Body of pancreas (tissue), 4 donors: ENCODE measurements at regions of chr17 and their contacts with region 1.

Region 1: GRCh38 chr17:19447085-19447583 is 36.1 kb downstream of the RNF112 start:
- DNase-seq: peak; percentile 79 to 83 (median 82)
- ATAC-seq: peak; percentile 75
- H3K4me3 ChIP-seq: no peak overlapping the region
- H3K27ac ChIP-seq: peak overlapping the region in 2 of 4 donors; percentile 2 to 9
- H3K4me1 ChIP-seq: peaks cover 5% of the 10 kb centered on the region
- H3K27me3 ChIP-seq: no peaks in the 10 kb centered on the region
- CTCF ChIP-seq: peak; percentile 79 to 98 (median 92)
- POLR2A ChIP-seq: no peak

Region 2: GRCh38 chr17:19369846-19370492 is 77.2 kb before region 1 on chr17:
- intact Hi-C with region 1: loop called (anchors 5 kb)
- DNase-seq: peak in 1 of 4 donors; percentile 9
- ATAC-seq: no peak
- H3K4me3 ChIP-seq: no peak overlapping the region
- H3K27ac ChIP-seq: no peak overlapping the region
- H3K4me1 ChIP-seq: peaks cover 3% of the 10 kb centered on the region
- H3K27me3 ChIP-seq: no peaks in the 10 kb centered on the region
- CTCF ChIP-seq: no peak
- POLR2A ChIP-seq: no peak

Region 3: DNA sequence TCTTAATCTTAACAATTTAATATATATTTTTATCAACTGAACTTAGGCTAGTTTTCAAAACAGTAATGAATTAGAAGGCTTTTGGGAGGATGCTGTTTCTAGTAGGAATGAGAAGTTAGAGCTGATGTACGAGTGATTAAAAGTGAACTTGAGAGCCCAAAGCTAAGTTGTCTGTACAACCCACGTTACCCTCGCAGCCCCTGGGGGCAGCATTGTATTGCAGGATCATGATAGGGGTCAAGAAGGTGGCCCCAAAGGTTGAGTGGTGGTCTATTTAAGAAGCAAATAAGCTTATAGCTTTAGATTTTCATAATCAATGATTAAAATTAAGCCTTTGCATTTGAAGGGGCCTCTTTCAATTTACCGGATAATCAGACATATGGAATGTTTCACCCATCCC is 167.8 kb after region 1 on chr17:
- intact Hi-C with region 1: no loop called
- DNase-seq: no peak
- ATAC-seq: no peak
- H3K4me3 ChIP-seq: no peak overlapping the region
- H3K27ac ChIP-seq: no peak overlapping the region
- H3K4me1 ChIP-seq: no peaks in the 10 kb centered on the region
- H3K27me3 ChIP-seq: no peaks in the 10 kb centered on the region
- CTCF ChIP-seq: peak in 1 of 7 experiments; percentile 17
- POLR2A ChIP-seq: no peak

Region 4: GRCh38 chr17:19660219-19660870 is 213.2 kb after region 1 on chr17:
- intact Hi-C with region 1: no loop called
- DNase-seq: no peak
- ATAC-seq: peak; percentile 49
- H3K4me3 ChIP-seq: no peak overlapping the region
- H3K27ac ChIP-seq: peak overlapping the region; percentile 25 to 80 (median 62)
- H3K4me1 ChIP-seq: peaks cover 37% of the 10 kb centered on the region
- H3K27me3 ChIP-seq: no peaks in the 10 kb centered on the region
- CTCF ChIP-seq: no peak
- POLR2A ChIP-seq: no peak